HEK293T (cell line): ENCODE measurements at regions of chr6 and their contacts with region 1.

Region 1: DNA sequence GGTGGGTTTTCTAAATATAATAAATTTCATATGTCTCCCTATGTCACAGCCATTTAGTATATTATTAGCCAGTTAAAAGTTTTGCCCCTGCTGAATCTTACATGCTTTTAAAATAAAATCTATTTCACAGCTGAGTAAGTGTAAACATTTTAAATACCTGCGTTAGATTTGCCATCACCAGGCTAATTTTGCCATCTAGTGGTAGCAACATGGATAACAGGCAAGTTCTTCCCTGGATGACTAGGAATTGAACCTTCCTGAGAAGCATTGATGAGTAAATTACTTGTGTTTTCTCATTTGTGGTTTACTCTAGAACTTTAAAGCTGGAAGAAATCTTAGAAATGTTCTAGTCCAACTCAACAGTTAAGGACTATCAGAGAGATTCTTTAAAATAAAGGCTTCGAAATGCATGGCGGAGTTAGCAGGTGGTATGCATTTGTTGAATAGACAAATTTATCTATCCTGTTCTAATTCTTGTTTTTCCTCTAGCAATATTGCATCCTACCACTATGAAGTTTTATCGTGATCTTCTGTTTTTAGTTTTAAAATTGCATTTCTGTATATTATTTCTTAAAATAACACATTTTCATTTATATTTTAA is 2.6 kb downstream of the PRSS35 start:
- DNase-seq: peak; percentile 40

Region 2: DNA sequence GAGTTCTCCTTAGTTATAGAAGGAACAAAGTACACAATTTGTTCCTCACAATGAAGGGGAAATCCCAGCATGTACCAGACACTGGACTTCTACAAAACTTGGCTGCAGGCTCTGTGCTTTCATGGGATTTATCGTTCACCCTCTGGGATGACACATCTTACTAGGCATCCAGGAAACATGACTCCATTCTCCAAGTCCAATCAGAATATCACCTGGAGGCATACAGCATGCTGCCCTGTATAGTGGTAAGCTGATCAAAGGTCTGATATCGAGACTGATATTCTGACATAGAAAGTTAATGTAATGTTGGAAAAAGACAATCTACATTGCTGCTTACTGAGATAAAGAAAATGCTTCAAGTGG is 315.1 kb before region 1 on chr6:
- CTCF ChIA-PET with region 1: no interaction called
- POLR2A ChIA-PET with region 1: no interaction called
- DNase-seq: no peak

Region 3: GRCh38 chr6:83221889-83222479 is 293.0 kb before region 1 on chr6:
- CTCF ChIA-PET with region 1: interaction called, 44 read pairs
- POLR2A ChIA-PET with region 1: no interaction called
- DNase-seq: peak; percentile 9

Region 4: GRCh38 chr6:83417880-83418663 is 96.9 kb before region 1 on chr6:
- CTCF ChIA-PET with region 1: interaction called, 47 read pairs
- POLR2A ChIA-PET with region 1: interaction called, 3 read pairs
- DNase-seq: peak; percentile 44

Region 5: GRCh38 chr6:83490217-83490807 is 24.7 kb before region 1 on chr6:
- CTCF ChIA-PET with region 1: no interaction called
- POLR2A ChIA-PET with region 1: no interaction called
- DNase-seq: no peak